ENCODE measurements at regions of chr10 and their contacts with region 1.

Region 1: DNA sequence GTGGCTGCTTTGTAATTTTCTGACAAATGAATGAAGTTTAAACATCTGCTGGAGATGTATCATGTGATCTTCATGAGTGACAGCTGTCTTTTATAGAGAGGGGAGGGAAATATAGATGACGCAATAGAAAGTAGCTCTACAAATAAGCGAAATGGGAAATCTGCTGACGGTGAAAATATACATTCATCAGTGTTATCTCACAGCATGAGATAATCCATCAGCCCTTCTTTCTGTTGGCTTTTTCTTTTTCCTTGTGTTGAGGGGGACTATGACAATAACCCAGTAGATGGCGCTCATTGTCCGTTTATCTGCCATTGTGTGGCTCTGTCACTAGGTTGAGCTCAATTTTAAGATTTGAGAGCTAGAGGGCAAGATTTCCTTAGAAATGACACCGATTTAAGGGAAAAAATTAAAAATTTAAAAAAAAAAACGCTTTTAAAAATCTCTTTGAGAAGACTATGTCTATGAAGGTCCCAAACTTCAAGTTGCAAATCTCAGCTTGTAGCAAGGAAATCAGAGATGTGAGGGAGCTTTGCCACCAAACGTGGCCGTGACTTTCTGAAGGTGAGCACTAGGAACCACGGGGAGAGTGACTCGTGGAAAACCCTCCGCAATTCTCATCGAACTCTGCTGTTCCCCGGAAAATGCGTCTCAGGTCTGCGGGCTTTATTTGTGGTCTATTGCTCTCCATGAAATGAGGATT is 114.6 kb upstream of the SFMBT2 start:
- DNase-seq: peak; percentile 53 to 66
- H3K4me3 ChIP-seq: no peak overlapping the region
- H3K27ac ChIP-seq: no peak overlapping the region
- H3K4me1 ChIP-seq: no peaks in the 10 kb centered on the region
- H3K27me3 ChIP-seq: no peaks in the 10 kb centered on the region
- CTCF ChIP-seq: peak; percentile 78 to 97 (median 88)
- POLR2A ChIP-seq: no peak

Region 2: GRCh38 chr10:7687228-7687907 is 161.9 kb after region 1 on chr10:
- intact Hi-C with region 1: loop called (anchors 5 kb)
- DNase-seq: peak; percentile 82 to 86
- H3K4me3 ChIP-seq: no peak overlapping the region
- H3K27ac ChIP-seq: no peak overlapping the region
- H3K4me1 ChIP-seq: no peaks in the 10 kb centered on the region
- H3K27me3 ChIP-seq: no peaks in the 10 kb centered on the region
- CTCF ChIP-seq: peak; percentile 88 to 98 (median 93)
- POLR2A ChIP-seq: no peak

Measured in uterus (tissue), 4 donors.